Activated T-helper 2 cell treated with anti-CD3 and anti-CD28 coated beads, Interferon-gamma antibody, Interleukin-2, Interleukin-4, amounts not matched to agents 10 μg/mL and 5 μg/mL and 100 μg/mL, durations not matched to agents 14 hours and 24 hours and 36 hours (primary cell): ENCODE measurements at regions of chr1 and their contacts with region 1.

Region 1: GRCh38 chr1:112390775-112391602 is 5.0 kb upstream of the CTTNBP2NL start:
- DNase-seq: peak; percentile 73
- H3K4me3 Mint-ChIP-seq: peak overlapping the region; percentile 75
- H3K27ac Mint-ChIP-seq: no peak overlapping the region
- H3K4me1 Mint-ChIP-seq: peaks cover 39% of the 10 kb centered on the region
- H3K27me3 Mint-ChIP-seq: peaks cover 5% of the 10 kb centered on the region

Region 2: GRCh38 chr1:112358798-112359408 is 32.1 kb before region 1 on chr1:
- intact Hi-C with region 1: no loop called
- DNase-seq: no peak
- H3K4me3 Mint-ChIP-seq: no peak overlapping the region
- H3K27ac Mint-ChIP-seq: no peak overlapping the region
- H3K4me1 Mint-ChIP-seq: no peaks in the 10 kb centered on the region
- H3K27me3 Mint-ChIP-seq: peaks cover 33% of the 10 kb centered on the region

Region 3: DNA sequence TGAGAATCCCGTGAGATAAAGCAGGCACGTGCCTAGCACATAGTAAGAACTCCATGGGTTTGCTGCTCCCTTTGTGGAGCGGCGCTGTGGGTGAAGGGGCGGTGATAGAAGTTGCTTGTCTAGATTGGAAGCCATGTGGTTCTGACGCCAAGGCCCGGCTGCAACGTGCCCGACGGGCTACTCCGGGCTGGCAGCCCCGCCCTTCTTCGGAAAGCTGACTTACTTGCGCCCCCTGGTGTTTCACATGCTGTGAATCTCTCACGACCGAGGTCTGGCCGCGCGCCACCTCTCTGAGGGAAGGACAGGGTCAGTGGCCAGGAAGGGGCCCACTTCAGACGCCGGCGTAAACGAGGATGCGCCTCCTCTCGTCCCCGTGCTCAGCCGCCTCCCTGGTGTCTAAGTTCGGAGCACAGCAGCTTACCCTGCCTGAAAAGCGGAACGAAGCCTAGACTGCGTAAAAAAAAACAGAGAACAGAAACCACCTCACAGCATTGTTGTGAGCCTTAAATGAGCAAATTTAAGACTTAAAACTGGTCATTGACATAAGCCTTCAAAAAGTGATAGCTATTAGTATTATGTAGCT is 75.2 kb after region 1 on chr1:
- intact Hi-C with region 1: loop called (anchors 1 kb)
- DNase-seq: peak; percentile 79
- H3K4me3 Mint-ChIP-seq: peak overlapping the region; percentile 77
- H3K27ac Mint-ChIP-seq: no peak overlapping the region
- H3K4me1 Mint-ChIP-seq: peaks cover 13% of the 10 kb centered on the region
- H3K27me3 Mint-ChIP-seq: peaks cover 26% of the 10 kb centered on the region

Region 4: GRCh38 chr1:112614460-112615065 is 223.6 kb after region 1 on chr1:
- intact Hi-C with region 1: loop called (anchors 1 kb)
- DNase-seq: no peak
- H3K4me3 Mint-ChIP-seq: no peak overlapping the region
- H3K27ac Mint-ChIP-seq: peak overlapping the region; percentile 27
- H3K4me1 Mint-ChIP-seq: peaks cover 10% of the 10 kb centered on the region
- H3K27me3 Mint-ChIP-seq: no peaks in the 10 kb centered on the region

Region 5: GRCh38 chr1:112803906-112804762 is 413.1 kb after region 1 on chr1:
- intact Hi-C with region 1: loop called (anchors 10 kb)
- DNase-seq: peak; percentile 42
- H3K4me3 Mint-ChIP-seq: no peak overlapping the region
- H3K27ac Mint-ChIP-seq: no peak overlapping the region
- H3K4me1 Mint-ChIP-seq: no peaks in the 10 kb centered on the region
- H3K27me3 Mint-ChIP-seq: peaks cover 11% of the 10 kb centered on the region